ENCODE measurements at regions of chrX and their contacts with region 1.

Region 1: GRCh38 chrX:71532753-71533425 is at the start of gene OGT:
- DNase-seq: peak; percentile 95
- ATAC-seq: peak; percentile 85
- H3K4me3 ChIP-seq: peak within 1 kb of the TSS; percentile 75 to 96 (median 86)
- H3K4me3 Mint-ChIP-seq: peak within 1 kb of the TSS; percentile 97
- H3K27ac ChIP-seq: peak within 1 kb of the TSS; percentile 87
- H3K27ac Mint-ChIP-seq: peak within 1 kb of the TSS; percentile 93
- H3K4me1 ChIP-seq: peaks cover 5 to 27% of the 10 kb centered on the region in 2 donors
- H3K4me1 Mint-ChIP-seq: peaks cover 26% of the 10 kb centered on the region
- H3K27me3 ChIP-seq: no peaks in the 10 kb centered on the region
- H3K27me3 Mint-ChIP-seq: no peaks in the 10 kb centered on the region
- CTCF ChIP-seq: no peak
- total RNA-seq, gene OGT: 307 and 330 TPM in 2 replicates

Region 2: GRCh38 chrX:71198066-71198465 is 334.8 kb before region 1 on chrX:
- CTCF ChIA-PET with region 1: no interaction called
- POLR2A ChIA-PET with region 1: no interaction called
- intact Hi-C with region 1: loop called (anchors 10 kb)
- DNase-seq: peak; percentile 68
- ATAC-seq: peak; percentile 84
- H3K4me3 ChIP-seq: peak overlapping the region; percentile 19 to 68 (median 59)
- H3K4me3 Mint-ChIP-seq: peak overlapping the region; percentile 97
- H3K27ac ChIP-seq: peak overlapping the region; percentile 25 to 53
- H3K27ac Mint-ChIP-seq: peak overlapping the region; percentile 92
- H3K4me1 ChIP-seq: peaks cover 15 to 21% of the 10 kb centered on the region in 2 donors
- H3K4me1 Mint-ChIP-seq: peaks cover 28% of the 10 kb centered on the region
- H3K27me3 ChIP-seq: no peaks in the 10 kb centered on the region
- H3K27me3 Mint-ChIP-seq: no peaks in the 10 kb centered on the region
- CTCF ChIP-seq: no peak

Region 3: DNA sequence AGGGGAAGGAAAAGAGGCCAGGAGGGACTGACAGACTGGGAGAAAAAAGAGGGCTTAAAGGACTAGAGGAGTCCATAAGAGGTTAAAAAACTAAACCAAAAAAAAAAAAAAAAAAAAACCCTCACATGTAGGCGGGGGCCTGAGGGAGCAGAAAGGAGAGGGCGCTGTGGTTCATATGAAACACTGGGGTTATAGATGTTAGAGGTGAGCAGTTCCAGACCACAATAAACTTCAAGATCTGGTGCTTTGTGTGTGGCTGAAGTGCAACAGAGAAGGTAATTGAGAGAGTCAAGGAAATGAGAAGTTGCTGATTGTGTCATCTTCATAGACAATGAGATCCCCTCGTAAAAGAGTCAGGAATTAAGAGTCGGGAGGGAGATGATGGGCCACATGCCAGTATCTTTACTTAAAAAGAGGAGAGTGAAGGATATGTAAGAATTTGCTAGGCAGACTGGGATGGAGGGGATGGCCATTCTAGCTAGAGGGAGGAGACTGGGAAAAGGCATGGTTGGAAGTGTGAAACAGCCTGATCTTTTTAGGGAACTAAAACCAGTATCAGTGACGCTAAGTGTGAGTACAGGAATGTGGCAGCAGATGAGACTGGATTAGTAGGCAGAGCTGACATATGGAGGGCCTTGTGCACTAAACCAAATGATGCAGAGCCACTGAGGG is 18.4 kb before region 1 on chrX:
- CTCF ChIA-PET with region 1: no interaction called
- POLR2A ChIA-PET with region 1: no interaction called
- intact Hi-C with region 1: no loop called
- DNase-seq: no peak
- ATAC-seq: no peak
- H3K4me3 ChIP-seq: no peak overlapping the region
- H3K4me3 Mint-ChIP-seq: no peak overlapping the region
- H3K27ac ChIP-seq: no peak overlapping the region
- H3K27ac Mint-ChIP-seq: no peak overlapping the region
- H3K4me1 ChIP-seq: no peaks in the 10 kb centered on the region
- H3K4me1 Mint-ChIP-seq: peaks cover 2% of the 10 kb centered on the region
- H3K27me3 ChIP-seq: no peaks in the 10 kb centered on the region
- H3K27me3 Mint-ChIP-seq: no peaks in the 10 kb centered on the region
- CTCF ChIP-seq: no peak